Heart left ventricle (tissue), 16 donors: ENCODE measurements at regions of chr7 and their contacts with region 1.

Region 1: DNA sequence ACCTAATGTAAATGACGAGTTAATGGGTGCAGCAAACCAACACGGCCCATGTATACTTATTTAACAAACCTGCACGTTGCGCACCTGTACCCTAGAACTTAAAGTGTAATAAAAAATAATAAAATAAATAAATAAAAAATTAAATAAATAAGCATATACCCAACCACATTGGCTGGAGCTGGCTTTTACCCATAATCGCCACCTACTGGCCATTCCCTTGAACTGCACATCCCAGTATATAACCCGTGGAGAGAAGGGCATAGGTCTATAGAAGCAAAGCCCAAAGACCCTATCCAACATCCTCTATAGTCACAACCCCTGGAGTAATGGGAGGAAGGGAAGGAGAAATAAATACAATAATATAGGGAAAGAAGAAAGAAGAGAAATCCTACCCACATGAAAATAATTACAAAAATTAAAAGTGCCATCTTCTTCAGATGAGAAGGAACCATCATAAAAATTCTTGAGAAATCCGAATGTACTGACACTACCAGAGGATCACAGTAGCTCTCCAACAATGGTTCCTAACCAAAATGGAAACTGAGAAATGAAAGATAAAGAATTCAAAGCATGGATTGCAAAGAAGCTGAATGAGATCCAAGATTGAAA is 65.6 kb downstream of the TWIST1 start:
- DNase-seq: peak in 3 of 5 donors; percentile 17 to 24 (median 21)
- ATAC-seq: no peak
- H3K4me3 ChIP-seq: no peak overlapping the region
- H3K27ac ChIP-seq: no peak overlapping the region
- H3K4me1 ChIP-seq: no peaks in the 10 kb centered on the region
- H3K27me3 ChIP-seq: no peaks in the 10 kb centered on the region
- CTCF ChIP-seq: peak; percentile 56 to 78 (median 70)
- POLR2A ChIP-seq: no peak

Region 2: DNA sequence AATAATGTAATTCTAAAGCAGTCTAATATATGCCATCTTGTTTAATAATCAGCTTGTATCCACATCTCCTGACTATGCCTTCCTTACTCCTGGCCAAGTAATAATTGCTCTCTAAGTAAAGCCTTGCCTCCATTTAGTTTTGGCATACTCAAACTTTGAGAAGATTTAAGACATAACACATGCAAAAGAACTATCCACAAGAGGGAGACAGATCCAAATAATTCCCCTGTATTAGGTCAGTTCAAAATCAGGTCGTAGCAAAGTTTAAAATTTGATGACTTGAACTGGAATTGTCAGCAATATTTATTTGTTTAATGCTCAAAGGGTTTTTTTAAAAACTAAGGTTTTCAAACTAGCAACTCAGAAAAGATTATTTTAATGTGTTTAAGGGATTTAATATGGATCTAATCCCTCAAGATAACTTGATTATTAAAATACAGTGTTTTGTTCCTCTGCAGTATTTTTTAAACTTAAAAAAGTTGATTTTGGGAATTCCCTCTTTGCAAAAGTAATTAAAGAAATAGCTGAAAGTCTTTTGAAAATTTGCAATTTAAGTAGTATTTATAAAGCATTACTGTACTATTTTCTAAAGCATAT is 461.0 kb before region 1 on chr7:
- intact Hi-C with region 1: loop called in 1 of 10 experiments (anchors 5 kb)
- DNase-seq: no peak
- ATAC-seq: peak in 2 of 4 donors; percentile 48 to 50
- H3K4me3 ChIP-seq: no peak overlapping the region
- H3K27ac ChIP-seq: no peak overlapping the region
- H3K4me1 ChIP-seq: peaks cover 0 to 6% (median 0%) of the 10 kb centered on the region in 12 donors
- H3K27me3 ChIP-seq: no peaks in the 10 kb centered on the region
- CTCF ChIP-seq: peak; percentile 33 to 69 (median 54)
- POLR2A ChIP-seq: no peak

Region 3: GRCh38 chr7:18693406-18693805 is 358.5 kb before region 1 on chr7:
- intact Hi-C with region 1: loop called in 1 of 10 experiments (anchors 10 kb)
- DNase-seq: no peak
- ATAC-seq: peak in 2 of 4 donors; percentile 82 to 83
- H3K4me3 ChIP-seq: no peak overlapping the region
- H3K27ac ChIP-seq: no peak overlapping the region
- H3K4me1 ChIP-seq: peaks cover 0 to 2% (median 0%) of the 10 kb centered on the region in 12 donors
- H3K27me3 ChIP-seq: no peaks in the 10 kb centered on the region
- CTCF ChIP-seq: peak in 11 of 12 donors; percentile 16 to 66 (median 49)
- POLR2A ChIP-seq: no peak